Panc1 (cell line): ENCODE measurements at regions of chr2 and their contacts with region 1.

Region 1: GRCh38 chr2:235746257-235747084 is 252.6 kb downstream of the AGAP1 start:
- DNase-seq: peak; percentile 50
- ATAC-seq: peak; percentile 97
- H3K4me3 ChIP-seq: no peak overlapping the region
- H3K27ac ChIP-seq: no peak overlapping the region
- H3K4me1 ChIP-seq: no peaks in the 10 kb centered on the region
- H3K27me3 ChIP-seq: no peaks in the 10 kb centered on the region
- CTCF ChIP-seq: peak; percentile 87

Region 2: GRCh38 chr2:234335661-234336228 is 1410.7 kb before region 1 on chr2:
- CTCF ChIA-PET with region 1: interaction called, 15 read pairs
- POLR2A ChIA-PET with region 1: no interaction called
- in situ Hi-C with region 1: no loop called
- intact Hi-C with region 1: no loop called
- DNase-seq: no peak
- ATAC-seq: peak; percentile 32; the same call in 1 of the 2 replicates
- H3K4me3 ChIP-seq: no peak overlapping the region
- H3K27ac ChIP-seq: peak overlapping the region; percentile 67
- H3K4me1 ChIP-seq: peaks cover 16% of the 10 kb centered on the region
- H3K27me3 ChIP-seq: no peaks in the 10 kb centered on the region
- CTCF ChIP-seq: no peak

Region 3: GRCh38 chr2:235595422-235596010 is 151.0 kb before region 1 on chr2:
- CTCF ChIA-PET with region 1: interaction called, 29 read pairs
- POLR2A ChIA-PET with region 1: no interaction called
- in situ Hi-C with region 1: no loop called
- intact Hi-C with region 1: loop called (anchors 1 kb)
- DNase-seq: peak; percentile 73
- ATAC-seq: peak; percentile 82
- H3K4me3 ChIP-seq: no peak overlapping the region
- H3K27ac ChIP-seq: no peak overlapping the region
- H3K4me1 ChIP-seq: no peaks in the 10 kb centered on the region
- H3K27me3 ChIP-seq: no peaks in the 10 kb centered on the region
- CTCF ChIP-seq: peak; percentile 89

Region 4: DNA sequence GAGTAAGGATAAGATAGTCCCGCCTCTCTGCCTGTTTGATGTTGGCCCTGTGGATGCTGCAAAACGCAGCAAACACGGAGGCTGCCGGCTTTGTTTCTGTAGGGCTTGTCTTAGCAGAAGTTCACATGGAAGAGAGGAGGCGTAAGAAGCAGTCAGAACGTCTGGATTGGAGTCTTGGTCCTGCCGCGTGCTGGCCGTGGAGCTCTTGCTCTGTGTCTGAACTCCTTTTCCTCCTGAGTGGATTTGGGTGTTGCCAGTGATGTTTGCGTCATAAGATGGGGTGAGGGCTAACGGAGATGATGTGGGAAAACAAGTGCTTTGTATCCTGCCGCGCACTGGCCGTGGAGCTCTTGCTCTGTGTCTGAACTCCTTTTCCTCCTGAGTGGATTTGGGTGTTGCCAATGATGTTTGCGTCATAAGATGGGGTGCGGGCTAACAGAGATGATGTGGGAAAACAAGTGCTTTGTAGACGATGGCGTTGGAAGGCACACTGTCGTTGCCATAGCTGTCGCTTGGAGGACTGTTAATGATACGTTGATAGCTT is 11.7 kb before region 1 on chr2:
- CTCF ChIA-PET with region 1: interaction called, 12 read pairs
- POLR2A ChIA-PET with region 1: no interaction called
- in situ Hi-C with region 1: no loop called
- intact Hi-C with region 1: no loop called
- DNase-seq: no peak
- ATAC-seq: no peak
- H3K4me3 ChIP-seq: no peak overlapping the region
- H3K27ac ChIP-seq: no peak overlapping the region
- H3K4me1 ChIP-seq: no peaks in the 10 kb centered on the region
- H3K27me3 ChIP-seq: no peaks in the 10 kb centered on the region
- CTCF ChIP-seq: no peak